ENCODE measurements at regions of chr22 and their contacts with region 1.

Region 1: GRCh38 chr22:21001560-21002325 is at the start of gene THAP7:
- DNase-seq: peak; percentile 94 to 98 (median 98)
- ATAC-seq: peak; percentile 95
- H3K4me3 ChIP-seq: peak within 1 kb of the TSS; percentile 79
- H3K4me3 Mint-ChIP-seq: peak within 1 kb of the TSS; percentile 94 to 99 (median 96)
- H3K27ac ChIP-seq: peak within 1 kb of the TSS; percentile 94
- H3K27ac Mint-ChIP-seq: peak within 1 kb of the TSS; percentile 98 to 100 (median 99)
- H3K4me1 ChIP-seq: peaks cover 24 to 26% of the 10 kb centered on the region in 2 donors
- H3K4me1 Mint-ChIP-seq: peaks cover 14 to 36% (median 20%) of the 10 kb centered on the region in 7 donors
- H3K27me3 ChIP-seq: no peaks in the 10 kb centered on the region
- H3K27me3 Mint-ChIP-seq: no peaks in the 10 kb centered on the region
- total RNA-seq, gene THAP7: 25.8 to 73.3 (median 64.7) TPM

Region 2: GRCh38 chr22:19122143-19122751 is 1879.5 kb before region 1 on chr22 and contains the start of gene DGCR2:
- CTCF ChIA-PET with region 1: no interaction called
- POLR2A ChIA-PET with region 1: no interaction called
- intact Hi-C with region 1: loop called in 1 of 2 experiments (anchors 5 kb)
- DNase-seq: peak; percentile 92 to 96 (median 94)
- ATAC-seq: peak; percentile 99
- H3K4me3 ChIP-seq: peak within 1 kb of the TSS; percentile 90
- H3K4me3 Mint-ChIP-seq: peak within 1 kb of the TSS; percentile 90 to 94 (median 93)
- H3K27ac ChIP-seq: peak within 1 kb of the TSS; percentile 91
- H3K27ac Mint-ChIP-seq: peak within 1 kb of the TSS; percentile 69 to 97 (median 87)
- H3K4me1 ChIP-seq: peaks cover 34 to 42% of the 10 kb centered on the region in 2 donors
- H3K4me1 Mint-ChIP-seq: peaks cover 36 to 53% (median 50%) of the 10 kb centered on the region in 7 donors
- H3K27me3 ChIP-seq: no peaks in the 10 kb centered on the region
- H3K27me3 Mint-ChIP-seq: peaks cover 0 to 2% (median 0%) of the 10 kb centered on the region in 5 donors
- total RNA-seq, gene DGCR2: 38.8 to 79.1 (median 50.4) TPM

Region 3: DNA sequence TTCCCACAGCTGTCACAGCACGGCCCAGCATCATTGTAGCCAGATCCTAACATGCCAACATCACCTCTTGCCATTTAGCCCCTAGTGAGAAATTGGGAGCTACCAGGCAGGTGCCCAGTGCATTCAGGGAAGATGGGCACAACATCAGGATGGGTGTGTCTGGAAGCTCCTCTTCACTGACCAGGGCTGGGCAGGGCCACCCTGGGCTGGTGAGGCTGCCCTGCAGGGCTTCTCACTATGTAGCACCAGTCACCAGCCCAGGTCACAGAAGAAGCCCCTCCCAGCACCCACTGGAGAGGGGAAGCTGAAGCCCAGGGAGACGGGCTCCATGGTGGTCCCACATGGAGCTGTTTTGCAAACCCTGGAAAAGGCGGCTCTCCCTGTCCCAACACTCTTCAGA is 593.9 kb before region 1 on chr22:
- CTCF ChIA-PET with region 1: no interaction called
- POLR2A ChIA-PET with region 1: no interaction called
- intact Hi-C with region 1: no loop called
- DNase-seq: no peak
- ATAC-seq: no peak
- H3K4me3 ChIP-seq: no peak overlapping the region
- H3K4me3 Mint-ChIP-seq: no peak overlapping the region
- H3K27ac ChIP-seq: no peak overlapping the region
- H3K27ac Mint-ChIP-seq: no peak overlapping the region
- H3K4me1 ChIP-seq: peaks cover 0 to 13% of the 10 kb centered on the region in 2 donors
- H3K4me1 Mint-ChIP-seq: peaks cover 9 to 16% (median 12%) of the 10 kb centered on the region in 7 donors
- H3K27me3 ChIP-seq: no peaks in the 10 kb centered on the region
- H3K27me3 Mint-ChIP-seq: peaks cover 0 to 6% (median 0%) of the 10 kb centered on the region in 5 donors

Region 4: DNA sequence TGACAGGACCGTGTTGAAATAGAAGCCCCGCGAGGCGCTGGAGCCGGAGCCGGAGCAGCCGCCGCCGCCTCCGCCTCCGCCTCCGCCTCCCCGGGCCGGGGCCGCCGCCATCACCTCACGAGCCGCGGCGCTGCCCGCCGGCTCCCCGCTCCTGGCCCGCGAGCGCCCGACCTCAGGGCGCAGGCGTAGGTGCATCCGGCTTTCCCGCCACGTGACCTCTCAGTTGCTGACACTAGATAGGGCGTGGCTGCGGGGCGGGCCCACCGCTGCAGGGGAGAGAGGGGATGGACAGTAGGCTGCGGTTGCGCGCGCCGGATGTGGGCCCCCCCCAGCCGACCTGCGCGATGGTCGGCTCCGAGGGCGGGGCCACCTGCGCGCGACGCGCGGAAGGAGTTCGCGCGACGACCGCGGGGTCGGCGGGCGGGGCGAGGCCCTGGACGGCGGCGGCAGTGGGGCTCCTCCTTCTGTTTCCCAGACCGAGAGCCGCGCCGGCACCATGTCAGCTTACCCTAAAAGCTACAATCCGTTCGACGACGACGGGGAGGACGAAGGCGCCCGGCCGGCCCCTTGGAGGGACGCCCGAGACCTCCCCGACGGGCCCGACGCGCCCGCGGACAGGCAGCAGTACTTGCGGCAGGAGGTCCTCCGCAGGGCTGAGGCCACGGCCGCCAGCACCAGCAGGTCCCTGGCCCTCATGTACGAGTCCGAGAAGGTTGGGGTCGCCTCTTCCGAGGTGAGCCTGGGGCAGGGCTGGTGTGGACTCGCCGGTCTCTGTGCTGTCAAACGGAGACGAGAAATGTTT is 142.9 kb before region 1 on chr22 and contains the starts of genes PI4KA and SNAP29:
- CTCF ChIA-PET with region 1: no interaction called
- POLR2A ChIA-PET with region 1: no interaction called
- intact Hi-C with region 1: loop called (anchors 2 kb)
- DNase-seq: peak; percentile 92 to 98 (median 96)
- ATAC-seq: peak; percentile 97
- H3K4me3 ChIP-seq: peak within 1 kb of the TSS; percentile 78
- H3K4me3 Mint-ChIP-seq: peak within 1 kb of the TSS; percentile 87 to 95 (median 92)
- H3K27ac ChIP-seq: peak within 1 kb of the TSS; percentile 87
- H3K27ac Mint-ChIP-seq: peak within 1 kb of the TSS; percentile 60 to 92 (median 88)
- H3K4me1 ChIP-seq: peaks cover 17 to 20% of the 10 kb centered on the region in 2 donors
- H3K4me1 Mint-ChIP-seq: peaks cover 38 to 76% (median 58%) of the 10 kb centered on the region in 7 donors
- H3K27me3 ChIP-seq: no peaks in the 10 kb centered on the region
- H3K27me3 Mint-ChIP-seq: no peaks in the 10 kb centered on the region
- total RNA-seq, gene PI4KA: 120 to 181 (median 168) TPM
- total RNA-seq, gene SNAP29: 15.2 to 32.8 (median 25.4) TPM

Region 5: DNA sequence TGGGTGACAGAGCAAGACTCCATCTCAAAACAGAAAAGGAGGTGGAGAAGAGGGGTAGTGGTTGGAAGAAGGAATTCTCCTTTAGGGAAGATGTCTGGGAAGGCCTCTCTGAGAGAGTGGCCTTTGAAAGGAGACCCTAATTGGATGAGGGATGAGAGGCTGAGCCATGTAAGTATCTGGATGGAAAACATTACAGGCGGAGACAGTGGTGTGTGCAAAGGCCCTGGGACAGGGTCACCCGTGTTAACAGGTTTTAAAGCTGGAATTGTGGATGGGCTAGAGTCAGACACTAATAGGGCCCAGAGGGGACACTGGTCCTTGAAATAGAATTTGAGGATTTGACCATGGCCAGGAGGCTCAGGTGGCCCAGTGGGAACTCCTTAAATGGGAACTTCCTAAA is 132.5 kb before region 1 on chr22:
- CTCF ChIA-PET with region 1: no interaction called
- POLR2A ChIA-PET with region 1: no interaction called
- intact Hi-C with region 1: no loop called
- DNase-seq: no peak
- ATAC-seq: no peak
- H3K4me3 ChIP-seq: no peak overlapping the region
- H3K4me3 Mint-ChIP-seq: no peak overlapping the region
- H3K27ac ChIP-seq: no peak overlapping the region
- H3K27ac Mint-ChIP-seq: peak overlapping the region in 1 of 9 donors; percentile 64
- H3K4me1 ChIP-seq: no peaks in the 10 kb centered on the region
- H3K4me1 Mint-ChIP-seq: peaks cover 5 to 24% (median 22%) of the 10 kb centered on the region in 7 donors
- H3K27me3 ChIP-seq: no peaks in the 10 kb centered on the region
- H3K27me3 Mint-ChIP-seq: no peaks in the 10 kb centered on the region

Region 6: GRCh38 chr22:20926243-20926642 is 75.5 kb before region 1 on chr22:
- CTCF ChIA-PET with region 1: no interaction called
- POLR2A ChIA-PET with region 1: no interaction called
- intact Hi-C with region 1: no loop called
- DNase-seq: no peak
- ATAC-seq: no peak
- H3K4me3 ChIP-seq: no peak overlapping the region
- H3K4me3 Mint-ChIP-seq: peak overlapping the region in 8 of 10 donors; percentile 1 to 55 (median 40)
- H3K27ac ChIP-seq: no peak overlapping the region
- H3K27ac Mint-ChIP-seq: peak overlapping the region in 7 of 9 donors; percentile 4 to 69 (median 33)
- H3K4me1 ChIP-seq: peaks cover 6 to 16% of the 10 kb centered on the region in 2 donors
- H3K4me1 Mint-ChIP-seq: peaks cover 36 to 78% (median 62%) of the 10 kb centered on the region in 7 donors
- H3K27me3 ChIP-seq: no peaks in the 10 kb centered on the region
- H3K27me3 Mint-ChIP-seq: no peaks in the 10 kb centered on the region

Region 7: DNA sequence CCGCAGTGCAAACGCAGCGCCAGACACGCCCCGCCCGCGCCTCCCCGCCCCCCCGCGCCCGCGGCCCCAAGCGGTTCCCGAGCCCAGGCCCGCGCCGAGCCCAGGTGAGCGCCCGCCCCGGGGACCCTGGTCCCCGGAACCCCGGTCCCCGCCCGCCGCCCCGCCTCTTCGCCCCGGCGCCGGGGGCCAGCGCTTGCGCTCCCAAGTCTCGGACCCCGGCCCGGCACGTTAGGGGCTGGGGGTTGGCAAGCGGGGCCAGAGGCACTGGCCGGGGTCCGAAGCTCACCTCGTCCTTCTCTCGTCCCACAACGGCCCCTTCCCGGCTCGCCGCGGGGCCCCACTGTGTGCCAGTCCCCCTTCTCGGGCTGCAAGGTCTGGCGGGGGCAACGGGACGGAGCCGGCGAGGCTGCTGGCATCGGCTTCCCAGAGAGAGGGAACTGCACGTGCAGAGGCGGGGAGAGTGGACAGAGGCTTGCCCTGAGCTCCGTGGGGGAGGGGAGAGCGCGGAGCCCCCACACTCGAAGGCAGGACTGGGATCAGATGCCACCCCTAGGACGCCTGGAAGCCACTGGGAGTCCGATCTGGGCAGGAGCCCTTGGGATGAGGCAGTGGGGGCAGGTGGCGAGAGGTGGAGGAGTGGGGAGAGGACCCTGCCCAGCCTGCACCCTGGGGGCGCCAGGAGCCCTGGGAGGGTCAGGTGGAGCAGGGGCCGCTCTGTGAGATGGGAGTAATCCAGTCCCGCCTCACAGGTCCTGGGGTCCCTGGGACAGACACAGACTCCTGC is 36.4 kb before region 1 on chr22:
- CTCF ChIA-PET with region 1: no interaction called
- POLR2A ChIA-PET with region 1: no interaction called
- intact Hi-C with region 1: loop called in 1 of 2 experiments (anchors 5 kb)
- DNase-seq: no peak
- ATAC-seq: peak; percentile 44
- H3K4me3 ChIP-seq: no peak overlapping the region
- H3K4me3 Mint-ChIP-seq: peak overlapping the region in 8 of 10 donors; percentile 7 to 71 (median 52)
- H3K27ac ChIP-seq: peak overlapping the region; percentile 29
- H3K27ac Mint-ChIP-seq: no peak overlapping the region
- H3K4me1 ChIP-seq: no peaks in the 10 kb centered on the region
- H3K4me1 Mint-ChIP-seq: peaks cover 0 to 17% (median 12%) of the 10 kb centered on the region in 7 donors
- H3K27me3 ChIP-seq: no peaks in the 10 kb centered on the region
- H3K27me3 Mint-ChIP-seq: peaks cover 2 to 31% (median 8%) of the 10 kb centered on the region in 5 donors

Region 8: GRCh38 chr22:20989323-20990138 is 12.2 kb before region 1 on chr22:
- CTCF ChIA-PET with region 1: no interaction called
- POLR2A ChIA-PET with region 1: interaction called, 21 read pairs
- intact Hi-C with region 1: no loop called
- DNase-seq: no peak
- ATAC-seq: no peak
- H3K4me3 ChIP-seq: no peak overlapping the region
- H3K4me3 Mint-ChIP-seq: no peak overlapping the region
- H3K27ac ChIP-seq: no peak overlapping the region
- H3K27ac Mint-ChIP-seq: no peak overlapping the region
- H3K4me1 ChIP-seq: peaks cover 0 to 5% of the 10 kb centered on the region in 2 donors
- H3K4me1 Mint-ChIP-seq: peaks cover 0 to 16% (median 8%) of the 10 kb centered on the region in 7 donors
- H3K27me3 ChIP-seq: no peaks in the 10 kb centered on the region
- H3K27me3 Mint-ChIP-seq: no peaks in the 10 kb centered on the region

Region 9: DNA sequence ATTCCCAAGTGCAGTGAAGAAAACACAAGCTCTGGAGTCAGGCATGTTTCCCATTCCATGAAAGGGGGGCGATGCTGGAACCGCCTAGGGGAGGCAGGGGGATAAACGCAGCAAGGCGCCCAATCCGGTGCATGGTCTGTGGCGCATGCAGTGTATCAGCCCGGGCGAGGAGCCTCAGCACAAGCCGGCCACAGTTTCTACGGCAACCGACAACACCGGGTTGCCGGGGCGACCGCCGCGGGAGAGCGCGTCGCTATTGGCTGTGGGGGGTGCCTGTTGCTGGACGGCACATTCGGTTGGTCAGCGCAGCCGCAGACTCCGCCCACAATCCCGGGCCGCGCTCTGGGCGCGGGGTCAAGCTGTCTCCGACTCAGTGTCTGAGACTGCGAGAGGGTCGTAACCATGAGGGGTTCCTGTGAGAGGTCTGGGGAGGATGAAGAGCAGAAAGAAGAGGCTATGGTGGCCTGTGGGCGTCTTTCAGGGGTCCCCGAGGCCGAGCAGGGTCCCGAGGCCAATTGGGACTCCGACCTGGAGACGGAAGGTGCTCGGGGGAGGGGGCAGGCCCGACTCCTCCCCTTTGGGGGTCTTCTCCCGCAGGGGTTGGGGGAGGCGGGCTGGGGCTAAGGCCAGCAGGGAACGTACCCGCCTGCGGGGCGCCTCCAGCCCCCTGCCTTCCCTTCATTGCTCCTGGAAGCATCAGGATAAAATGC is 44.0 kb after region 1 on chr22 and contains the start of gene LRRC74B:
- CTCF ChIA-PET with region 1: no interaction called
- POLR2A ChIA-PET with region 1: interaction called, 3 read pairs
- intact Hi-C with region 1: loop called in 1 of 2 experiments (anchors 1 kb)
- DNase-seq: peak; percentile 33 to 72 (median 62)
- ATAC-seq: peak; percentile 97
- H3K4me3 ChIP-seq: peak within 1 kb of the TSS; percentile 16
- H3K4me3 Mint-ChIP-seq: peak within 1 kb of the TSS; percentile 51 to 75 (median 68)
- H3K27ac ChIP-seq: no peak within 1 kb of the TSS
- H3K27ac Mint-ChIP-seq: peak within 1 kb of the TSS in 6 of 9 donors; percentile 62 to 92 (median 73)
- H3K4me1 ChIP-seq: peaks cover 6 to 16% of the 10 kb centered on the region in 2 donors
- H3K4me1 Mint-ChIP-seq: peaks cover 12 to 25% (median 21%) of the 10 kb centered on the region in 7 donors
- H3K27me3 ChIP-seq: no peaks in the 10 kb centered on the region
- H3K27me3 Mint-ChIP-seq: peaks cover 12 to 31% (median 24%) of the 10 kb centered on the region in 5 donors
- total RNA-seq, gene LRRC74B: not detected

Region 10: DNA sequence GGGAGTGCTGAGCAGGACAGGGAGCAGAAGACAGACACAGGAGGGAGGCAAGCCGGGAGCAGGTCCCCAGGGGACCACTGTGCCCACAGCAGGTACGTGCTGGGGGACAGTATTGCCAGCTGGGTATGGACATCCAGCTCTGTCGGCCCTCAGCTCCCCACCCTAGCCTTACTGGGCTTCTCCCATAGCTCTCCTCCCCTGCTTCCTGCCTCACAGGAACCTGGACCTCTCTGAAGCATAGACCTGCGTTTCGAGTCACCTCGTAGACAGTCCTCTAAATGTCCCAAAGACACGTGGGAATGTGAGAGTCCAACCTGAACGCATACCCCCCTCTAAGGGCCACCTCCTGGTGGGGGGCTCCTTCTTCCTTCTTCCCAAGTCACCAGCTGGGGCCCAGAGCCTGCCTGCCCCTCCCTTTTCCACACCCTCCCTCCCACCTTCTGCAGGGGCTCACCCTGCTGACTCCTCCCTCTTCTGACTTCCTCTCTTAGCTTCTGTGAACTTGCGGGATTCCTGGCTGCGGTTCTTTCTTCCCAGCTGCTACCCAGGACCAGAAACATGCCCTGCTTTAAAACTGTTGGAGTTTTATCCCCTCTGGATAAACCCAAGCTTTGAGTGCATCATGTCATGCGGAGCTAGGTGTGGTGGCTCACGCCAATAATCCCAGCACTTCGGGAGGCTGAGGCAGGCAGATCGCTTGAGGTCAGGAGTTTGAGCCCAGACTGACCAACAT is 54.0 kb after region 1 on chr22:
- CTCF ChIA-PET with region 1: no interaction called
- POLR2A ChIA-PET with region 1: no interaction called
- intact Hi-C with region 1: no loop called
- DNase-seq: no peak
- ATAC-seq: peak; percentile 46
- H3K4me3 ChIP-seq: peak overlapping the region; percentile 3
- H3K4me3 Mint-ChIP-seq: peak overlapping the region; percentile 64 to 77 (median 70)
- H3K27ac ChIP-seq: no peak overlapping the region
- H3K27ac Mint-ChIP-seq: peak overlapping the region in 4 of 9 donors; percentile 33 to 83 (median 62)
- H3K4me1 ChIP-seq: peaks cover 0 to 14% of the 10 kb centered on the region in 2 donors
- H3K4me1 Mint-ChIP-seq: peaks cover 19 to 29% (median 24%) of the 10 kb centered on the region in 7 donors
- H3K27me3 ChIP-seq: no peaks in the 10 kb centered on the region
- H3K27me3 Mint-ChIP-seq: peaks cover 0 to 11% (median 0%) of the 10 kb centered on the region in 5 donors

Region 11: GRCh38 chr22:21641789-21642583 is 640.2 kb after region 1 on chr22 and contains the start of gene SDF2L1:
- CTCF ChIA-PET with region 1: no interaction called
- POLR2A ChIA-PET with region 1: no interaction called
- intact Hi-C with region 1: loop called in 1 of 2 experiments (anchors 5 kb)
- DNase-seq: peak; percentile 93 to 99 (median 98)
- ATAC-seq: peak; percentile 98
- H3K4me3 ChIP-seq: peak within 1 kb of the TSS; percentile 67
- H3K4me3 Mint-ChIP-seq: peak within 1 kb of the TSS; percentile 80 to 91 (median 86)
- H3K27ac ChIP-seq: peak within 1 kb of the TSS; percentile 83
- H3K27ac Mint-ChIP-seq: peak within 1 kb of the TSS; percentile 53 to 98 (median 88)
- H3K4me1 ChIP-seq: peaks cover 18 to 20% of the 10 kb centered on the region in 2 donors
- H3K4me1 Mint-ChIP-seq: peaks cover 24 to 34% (median 32%) of the 10 kb centered on the region in 7 donors
- H3K27me3 ChIP-seq: no peaks in the 10 kb centered on the region
- H3K27me3 Mint-ChIP-seq: no peaks in the 10 kb centered on the region
- total RNA-seq, gene SDF2L1: 22.1 to 99.8 (median 31.7) TPM

Measured in naive thymus-derived CD4-positive, alpha-beta T cell (primary cell).